Cardiac septum (tissue), 1 donor: ENCODE measurements at regions of chr6 and their contacts with region 1.

Region 1: GRCh38 chr6:142692942-142693341 is 252.0 kb downstream of the HIVEP2 start:
- DNase-seq: no peak

Region 2: GRCh38 chr6:143026696-143027449 is 333.9 kb after region 1 on chr6:
- intact Hi-C with region 1: loop called (anchors 1 kb)
- DNase-seq: peak; percentile 74

Region 3: GRCh38 chr6:143427109-143427817 is 734.3 kb after region 1 on chr6:
- intact Hi-C with region 1: loop called (anchors 2 kb)
- DNase-seq: peak; percentile 80